Activated naive CD4-positive, alpha-beta T cell treated with anti-CD3 and anti-CD28 coated beads for 36 hours (primary cell): ENCODE measurements at regions of chr14 and their contacts with region 1.

Region 1: GRCh38 chr14:76918751-76919543 is 92.7 kb downstream of the LRRC74A start:
- DNase-seq: peak; percentile 42
- H3K4me3 Mint-ChIP-seq: no peak overlapping the region
- H3K27ac Mint-ChIP-seq: peak overlapping the region; percentile 16
- H3K4me1 Mint-ChIP-seq: peaks cover 43% of the 10 kb centered on the region
- H3K27me3 Mint-ChIP-seq: no peaks in the 10 kb centered on the region

Region 2: GRCh38 chr14:76876076-76876475 is 42.9 kb before region 1 on chr14:
- CTCF ChIA-PET with region 1: interaction called, 31 read pairs
- intact Hi-C with region 1: no loop called
- DNase-seq: peak; percentile 55
- H3K4me3 Mint-ChIP-seq: no peak overlapping the region
- H3K27ac Mint-ChIP-seq: no peak overlapping the region
- H3K4me1 Mint-ChIP-seq: no peaks in the 10 kb centered on the region
- H3K27me3 Mint-ChIP-seq: no peaks in the 10 kb centered on the region

Region 3: DNA sequence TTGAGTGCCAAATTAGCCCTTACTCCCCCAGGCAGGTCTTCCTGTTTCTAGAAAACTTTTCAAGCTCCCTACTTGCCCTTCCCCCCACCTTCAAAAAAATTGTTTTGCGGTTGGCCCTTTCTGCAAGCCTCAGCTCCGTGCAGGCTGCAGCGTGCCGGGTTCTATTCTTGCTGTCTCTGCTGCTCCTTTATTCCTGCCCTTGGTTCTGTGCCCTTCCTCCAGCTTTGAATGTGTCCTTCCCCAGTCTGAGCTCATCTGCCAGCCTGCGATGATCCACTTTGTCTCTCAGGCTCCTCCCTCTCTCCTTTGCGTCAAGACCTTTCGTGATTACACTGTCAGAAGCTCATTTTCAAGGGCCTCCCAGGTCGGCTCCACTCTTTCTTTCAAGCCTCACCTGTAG is 11.0 kb after region 1 on chr14:
- CTCF ChIA-PET with region 1: interaction called, 36 read pairs
- intact Hi-C with region 1: loop called (anchors 1 kb)
- DNase-seq: peak; percentile 85
- H3K4me3 Mint-ChIP-seq: peak overlapping the region; percentile 58
- H3K27ac Mint-ChIP-seq: peak overlapping the region; percentile 72
- H3K4me1 Mint-ChIP-seq: peaks cover 70% of the 10 kb centered on the region
- H3K27me3 Mint-ChIP-seq: no peaks in the 10 kb centered on the region

Region 4: GRCh38 chr14:76947078-76947837 is 28.3 kb after region 1 on chr14:
- CTCF ChIA-PET with region 1: interaction called, 20 read pairs
- intact Hi-C with region 1: loop called (anchors 2 kb)
- DNase-seq: peak; percentile 93
- H3K4me3 Mint-ChIP-seq: no peak overlapping the region
- H3K27ac Mint-ChIP-seq: peak overlapping the region; percentile 39
- H3K4me1 Mint-ChIP-seq: peaks cover 33% of the 10 kb centered on the region
- H3K27me3 Mint-ChIP-seq: no peaks in the 10 kb centered on the region

Region 5: GRCh38 chr14:76962303-76962660 is 43.3 kb after region 1 on chr14:
- CTCF ChIA-PET with region 1: interaction called, 10 read pairs
- intact Hi-C with region 1: loop called (anchors 1 kb)
- DNase-seq: no peak
- H3K4me3 Mint-ChIP-seq: peak overlapping the region; percentile 68
- H3K27ac Mint-ChIP-seq: peak overlapping the region; percentile 98
- H3K4me1 Mint-ChIP-seq: peaks cover 90% of the 10 kb centered on the region
- H3K27me3 Mint-ChIP-seq: no peaks in the 10 kb centered on the region

Region 6: DNA sequence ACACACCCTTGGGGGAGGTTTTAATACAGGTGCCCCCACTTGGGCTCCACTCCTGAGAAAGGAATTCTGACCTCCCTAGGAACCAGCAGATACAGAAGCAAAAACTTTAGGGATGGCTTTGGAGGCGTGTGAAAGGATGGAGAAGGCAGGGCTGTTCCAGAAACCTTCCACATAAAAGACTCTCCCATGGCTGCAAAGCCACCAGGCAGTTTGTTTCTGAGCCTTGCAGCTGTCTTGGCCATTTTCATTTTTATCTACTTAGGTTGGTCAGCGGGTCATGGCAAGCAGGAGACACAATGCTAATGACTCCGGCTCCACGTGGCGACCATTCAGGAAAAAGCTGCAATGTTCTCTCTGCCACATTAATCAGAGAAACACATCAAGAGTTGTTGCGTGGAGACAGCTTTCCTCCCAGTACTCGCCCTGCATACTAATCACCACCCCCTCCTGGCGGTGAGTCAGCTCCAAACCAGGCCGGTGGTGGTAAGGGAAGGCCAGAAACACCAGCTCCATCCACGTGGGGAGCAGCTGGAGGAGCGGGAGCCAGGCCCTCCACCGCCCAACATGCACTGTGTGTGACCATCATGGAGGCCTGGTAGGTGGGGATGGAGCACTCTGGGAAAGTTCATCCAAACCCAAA is 140.4 kb after region 1 on chr14:
- CTCF ChIA-PET with region 1: interaction called, 299 read pairs
- intact Hi-C with region 1: no loop called
- DNase-seq: peak; percentile 37
- H3K4me3 Mint-ChIP-seq: no peak overlapping the region
- H3K27ac Mint-ChIP-seq: no peak overlapping the region
- H3K4me1 Mint-ChIP-seq: peaks cover 5% of the 10 kb centered on the region
- H3K27me3 Mint-ChIP-seq: no peaks in the 10 kb centered on the region